PC-9 (cell line): ENCODE measurements at regions of chr11 and their contacts with region 1.

Region 1: GRCh38 chr11:102401905-102402304 is 50.7 kb downstream of the TMEM123 start:
- DNase-seq: no peak
- H3K4me3 ChIP-seq: no peak overlapping the region
- H3K27ac ChIP-seq: no peak overlapping the region
- H3K4me1 ChIP-seq: no peaks in the 10 kb centered on the region
- H3K27me3 ChIP-seq: no peaks in the 10 kb centered on the region
- CTCF ChIP-seq: no peak

Region 2: DNA sequence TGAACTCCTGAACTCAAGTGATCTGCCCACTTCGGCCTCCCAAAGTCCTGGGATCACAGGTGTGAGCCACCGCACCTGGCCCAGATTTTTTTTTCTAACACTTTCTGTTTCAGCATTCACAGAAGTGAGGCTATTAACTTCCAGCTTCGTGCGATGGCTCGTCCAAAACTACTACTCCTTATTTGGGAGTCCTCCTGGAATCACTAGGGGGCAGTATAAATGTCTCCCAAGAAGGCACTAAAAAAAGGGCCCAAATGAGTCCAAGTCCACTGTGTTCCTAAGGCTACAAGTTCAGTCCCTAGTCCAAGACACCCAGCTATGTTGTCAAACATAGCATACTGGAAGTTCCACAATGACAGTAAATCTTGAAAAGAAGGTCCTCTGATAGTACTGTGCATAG is 147.9 kb before region 1 on chr11:
- CTCF ChIA-PET with region 1: interaction called, 12 read pairs
- POLR2A ChIA-PET with region 1: no interaction called
- intact Hi-C with region 1: no loop called
- DNase-seq: peak in 1 of 2 experiments; percentile 21
- H3K4me3 ChIP-seq: no peak overlapping the region
- H3K27ac ChIP-seq: no peak overlapping the region
- H3K4me1 ChIP-seq: peaks cover 24% of the 10 kb centered on the region
- H3K27me3 ChIP-seq: no peaks in the 10 kb centered on the region
- CTCF ChIP-seq: peak; percentile 48; the same call in 1 of the 2 replicates

Region 3: DNA sequence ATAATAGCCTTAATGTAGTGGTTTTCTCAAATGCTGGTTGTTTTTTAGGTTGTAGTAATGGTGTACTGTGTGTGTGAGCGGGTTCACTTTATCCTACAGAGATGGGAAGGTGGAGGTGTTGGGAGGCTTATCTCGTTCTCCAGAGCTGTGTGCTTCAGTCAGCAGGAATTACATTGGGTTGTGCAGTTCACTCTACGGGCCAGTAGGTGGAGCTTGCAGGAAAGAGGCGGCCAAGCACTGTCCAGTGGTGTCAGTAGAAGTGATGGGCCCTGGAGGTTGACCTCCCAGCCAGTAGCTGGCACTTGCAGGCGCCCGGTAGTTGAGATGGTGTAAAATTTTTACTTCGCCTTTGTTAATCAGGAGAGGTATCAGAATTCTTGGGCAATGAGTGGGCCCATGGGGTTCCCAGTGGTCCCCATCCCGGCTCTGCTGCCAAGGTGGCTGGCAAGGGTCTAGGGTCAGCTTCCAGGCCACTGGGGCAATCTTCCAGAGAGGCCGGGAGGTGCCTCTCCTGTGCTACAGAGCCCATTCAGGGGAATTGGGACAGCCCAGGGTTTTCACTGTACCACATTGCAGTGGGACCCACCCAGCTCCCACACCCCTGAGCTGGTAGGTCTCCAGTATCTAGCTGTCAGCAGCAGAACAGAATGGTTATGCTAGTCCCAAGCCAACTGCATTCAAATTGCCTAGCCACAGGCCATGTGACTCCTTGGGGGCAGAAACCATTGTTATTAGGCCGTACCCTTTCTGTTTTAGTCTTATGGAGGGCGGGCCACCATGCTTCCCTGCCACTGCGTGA is 11.0 kb before region 1 on chr11:
- CTCF ChIA-PET with region 1: no interaction called
- POLR2A ChIA-PET with region 1: interaction called, 12 read pairs
- intact Hi-C with region 1: no loop called
- DNase-seq: peak; percentile 45 to 55
- H3K4me3 ChIP-seq: no peak overlapping the region
- H3K27ac ChIP-seq: no peak overlapping the region
- H3K4me1 ChIP-seq: no peaks in the 10 kb centered on the region
- H3K27me3 ChIP-seq: no peaks in the 10 kb centered on the region
- CTCF ChIP-seq: peak; percentile 96

Region 4: GRCh38 chr11:102430158-102430836 is 28.4 kb after region 1 on chr11:
- CTCF ChIA-PET with region 1: no interaction called
- POLR2A ChIA-PET with region 1: no interaction called
- intact Hi-C with region 1: no loop called
- DNase-seq: no peak
- H3K4me3 ChIP-seq: no peak overlapping the region
- H3K27ac ChIP-seq: no peak overlapping the region
- H3K4me1 ChIP-seq: no peaks in the 10 kb centered on the region
- H3K27me3 ChIP-seq: no peaks in the 10 kb centered on the region
- CTCF ChIP-seq: no peak